Caco-2 (cell line): ENCODE measurements at regions of chr2 and their contacts with region 1.

Region 1: DNA sequence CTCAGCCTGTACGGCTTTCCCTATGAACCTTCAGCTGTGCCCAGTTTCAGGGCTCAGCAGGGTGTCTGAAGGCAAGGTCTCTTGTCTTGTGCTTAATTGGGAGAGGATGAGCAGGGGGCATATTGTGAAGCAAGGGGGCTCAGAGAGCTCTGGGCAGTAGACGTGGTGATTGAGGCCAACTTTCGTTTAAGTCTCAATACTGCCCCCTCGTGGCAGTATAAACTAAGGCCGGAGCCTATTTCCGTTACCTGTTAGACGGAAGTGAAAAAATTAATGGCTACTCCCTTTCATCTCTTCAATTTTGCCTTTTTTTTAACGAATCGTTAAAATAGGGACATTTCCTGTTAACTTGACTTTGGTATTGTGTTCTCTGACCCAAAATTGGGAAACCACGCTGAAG is 193.4 kb downstream of the TDRD15 start:
- DNase-seq: peak; percentile 48 to 70
- H3K4me3 ChIP-seq: no peak overlapping the region
- H3K4me3 Mint-ChIP-seq: no peak overlapping the region
- H3K27ac Mint-ChIP-seq: peak overlapping the region; percentile 57
- H3K4me1 ChIP-seq: peaks cover 14% of the 10 kb centered on the region
- H3K4me1 Mint-ChIP-seq: peaks cover 10% of the 10 kb centered on the region
- H3K27me3 ChIP-seq: no peaks in the 10 kb centered on the region
- H3K27me3 Mint-ChIP-seq: no peaks in the 10 kb centered on the region
- CTCF ChIP-seq: peak; percentile 66 to 73

Region 2: DNA sequence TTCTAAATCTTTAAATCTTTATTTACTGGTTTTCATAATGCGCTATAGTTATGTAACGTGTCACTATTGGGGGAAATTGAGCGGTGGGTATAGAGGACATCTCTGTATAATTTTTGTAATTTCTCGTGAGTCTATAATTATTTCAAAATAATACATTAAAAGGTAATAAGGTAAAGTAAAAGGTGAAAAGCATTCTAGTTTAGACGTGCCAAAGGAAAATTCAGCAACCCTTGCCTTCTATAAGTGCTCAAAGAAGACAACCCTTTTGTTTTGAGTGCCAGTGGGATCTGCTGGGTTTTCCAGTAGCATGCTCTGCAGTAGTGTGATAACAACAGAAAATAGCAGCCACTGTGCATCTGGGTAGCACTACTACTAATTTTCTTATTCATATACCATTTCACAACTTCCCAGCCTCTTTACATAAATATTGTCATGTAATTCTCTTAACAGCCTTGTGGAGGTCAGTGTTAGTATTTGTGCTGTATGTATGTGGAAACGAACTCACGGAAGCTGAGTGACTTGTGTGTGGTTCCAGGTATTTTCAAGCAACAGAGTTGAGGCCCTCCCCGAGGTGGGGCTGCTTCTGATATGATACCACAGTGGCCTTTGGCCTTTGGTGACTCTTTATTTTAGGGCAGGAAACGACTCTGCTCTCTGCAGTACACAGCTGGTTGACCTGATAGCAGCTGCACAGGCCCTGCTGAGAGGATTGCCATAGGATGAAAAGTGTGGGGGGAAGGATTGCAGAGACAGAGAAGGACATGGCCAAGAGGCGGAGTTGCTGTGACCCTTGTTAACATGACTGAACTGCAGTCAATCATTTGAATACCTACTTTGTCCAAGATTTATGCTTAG is 88.9 kb before region 1 on chr2:
- CTCF ChIA-PET with region 1: no interaction called
- POLR2A ChIA-PET with region 1: no interaction called
- intact Hi-C with region 1: loop called (anchors 1 kb)
- DNase-seq: peak; percentile 16 to 48
- H3K4me3 ChIP-seq: no peak overlapping the region
- H3K4me3 Mint-ChIP-seq: no peak overlapping the region
- H3K27ac Mint-ChIP-seq: peak overlapping the region; percentile 31
- H3K4me1 ChIP-seq: peaks cover 16% of the 10 kb centered on the region
- H3K4me1 Mint-ChIP-seq: peaks cover 7% of the 10 kb centered on the region
- H3K27me3 ChIP-seq: no peaks in the 10 kb centered on the region
- H3K27me3 Mint-ChIP-seq: no peaks in the 10 kb centered on the region
- CTCF ChIP-seq: no peak